PC-3 (cell line): ENCODE measurements at regions of chr2 and their contacts with region 1.

Region 1: GRCh38 chr2:128090945-128091725 is at the start of gene UGGT1:
- DNase-seq: peak; percentile 97
- ATAC-seq: peak; percentile 97
- H3K4me3 ChIP-seq: peak within 1 kb of the TSS; percentile 96
- H3K27ac ChIP-seq: peak within 1 kb of the TSS; percentile 52
- H3K4me1 ChIP-seq: peaks cover 6% of the 10 kb centered on the region; the same call in 1 of the 2 replicates
- H3K27me3 ChIP-seq: no peaks in the 10 kb centered on the region
- CTCF ChIP-seq: no peak
- total RNA-seq, gene UGGT1: 59.9 and 63.8 TPM in 2 replicates

Region 2: DNA sequence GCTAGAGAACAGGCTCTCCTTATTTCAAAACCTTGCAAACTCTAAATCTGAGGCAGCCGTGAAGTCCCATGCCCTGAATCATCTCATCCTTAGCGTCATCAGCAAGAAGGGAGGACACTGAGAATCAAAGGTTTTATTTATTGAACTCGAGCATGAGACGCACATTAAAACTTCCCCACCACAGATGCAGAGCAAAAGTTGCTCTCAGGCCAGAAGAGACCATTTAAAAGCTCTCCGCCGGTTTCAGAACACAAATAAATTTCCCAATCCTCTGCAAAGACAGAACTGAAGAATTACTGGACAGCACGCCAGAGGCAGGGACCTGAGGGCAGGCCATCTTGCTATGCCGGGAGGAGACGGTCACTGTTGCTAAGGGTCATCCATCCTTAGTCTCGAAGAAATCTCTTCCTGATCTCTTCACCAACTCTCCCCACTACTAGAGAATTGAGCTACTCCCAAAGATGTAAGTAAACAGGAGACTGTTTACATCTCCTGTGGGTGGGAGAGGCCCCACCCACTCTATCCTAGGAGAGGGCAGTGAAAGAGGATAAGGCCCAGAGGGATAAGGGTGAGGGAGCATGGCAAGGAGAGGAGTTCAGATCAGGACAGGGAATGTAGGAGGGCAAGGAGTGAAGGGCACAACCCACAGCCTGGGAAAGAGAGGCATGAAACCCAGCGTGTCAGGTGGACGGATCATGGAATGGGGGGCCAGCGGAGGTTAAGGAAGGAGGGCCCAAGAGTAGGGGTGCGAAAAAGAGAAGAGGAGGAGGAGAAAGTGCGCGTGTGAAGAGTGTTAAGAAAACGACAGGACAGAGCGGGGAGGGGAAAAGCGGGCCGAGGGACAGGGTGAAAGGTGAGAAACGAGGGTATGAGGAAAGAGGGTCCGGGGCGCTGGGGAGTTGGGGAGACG is 206.4 kb before region 1 on chr2:
- CTCF ChIA-PET with region 1: no interaction called
- POLR2A ChIA-PET with region 1: no interaction called
- intact Hi-C with region 1: loop called (anchors 10 kb)
- DNase-seq: peak; percentile 31
- ATAC-seq: peak; percentile 2; the same call in 1 of the 2 replicates
- H3K4me3 ChIP-seq: peak overlapping the region; percentile 77
- H3K27ac ChIP-seq: peak overlapping the region; percentile 57
- H3K4me1 ChIP-seq: peaks cover 31% of the 10 kb centered on the region
- H3K27me3 ChIP-seq: no peaks in the 10 kb centered on the region
- CTCF ChIP-seq: no peak

Region 3: DNA sequence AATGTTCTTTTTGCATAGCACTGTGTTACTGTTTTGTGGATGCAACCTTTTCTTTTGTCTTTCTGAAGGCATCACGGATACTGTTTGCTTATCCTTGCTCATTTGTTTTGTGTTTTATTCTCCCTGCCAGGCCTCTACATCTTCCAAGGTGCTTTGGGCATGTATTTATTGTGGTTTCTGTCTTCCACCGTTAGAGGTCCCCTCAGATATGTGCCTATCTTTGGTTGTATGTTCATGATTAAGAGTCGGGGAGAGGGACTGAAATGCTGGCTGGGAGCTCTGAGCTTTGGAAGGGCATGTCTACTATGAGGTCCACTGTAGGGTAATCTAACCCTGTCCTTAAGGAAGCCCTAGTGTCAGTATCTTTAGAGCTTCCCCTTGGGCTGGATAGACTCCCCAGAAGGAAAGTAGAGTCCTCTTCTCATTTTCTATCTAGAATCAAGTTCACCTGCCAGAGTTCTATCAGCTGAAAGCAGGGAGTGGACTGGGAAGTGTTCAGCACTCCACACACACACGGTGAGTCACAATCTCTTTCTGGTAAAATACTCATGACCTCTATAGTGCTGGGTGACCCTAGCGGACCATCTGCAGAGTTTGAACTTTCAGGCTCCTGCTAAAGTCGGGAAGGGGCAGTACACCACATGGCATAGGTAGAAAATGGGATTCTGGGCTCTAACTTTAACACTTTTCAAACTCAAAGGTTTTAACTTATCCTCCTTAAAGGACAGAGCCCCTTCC is 106.8 kb before region 1 on chr2:
- CTCF ChIA-PET with region 1: no interaction called
- POLR2A ChIA-PET with region 1: no interaction called
- intact Hi-C with region 1: no loop called
- DNase-seq: no peak
- ATAC-seq: peak; percentile 51
- H3K4me3 ChIP-seq: no peak overlapping the region
- H3K27ac ChIP-seq: no peak overlapping the region
- H3K4me1 ChIP-seq: no peaks in the 10 kb centered on the region
- H3K27me3 ChIP-seq: no peaks in the 10 kb centered on the region
- CTCF ChIP-seq: no peak

Region 4: DNA sequence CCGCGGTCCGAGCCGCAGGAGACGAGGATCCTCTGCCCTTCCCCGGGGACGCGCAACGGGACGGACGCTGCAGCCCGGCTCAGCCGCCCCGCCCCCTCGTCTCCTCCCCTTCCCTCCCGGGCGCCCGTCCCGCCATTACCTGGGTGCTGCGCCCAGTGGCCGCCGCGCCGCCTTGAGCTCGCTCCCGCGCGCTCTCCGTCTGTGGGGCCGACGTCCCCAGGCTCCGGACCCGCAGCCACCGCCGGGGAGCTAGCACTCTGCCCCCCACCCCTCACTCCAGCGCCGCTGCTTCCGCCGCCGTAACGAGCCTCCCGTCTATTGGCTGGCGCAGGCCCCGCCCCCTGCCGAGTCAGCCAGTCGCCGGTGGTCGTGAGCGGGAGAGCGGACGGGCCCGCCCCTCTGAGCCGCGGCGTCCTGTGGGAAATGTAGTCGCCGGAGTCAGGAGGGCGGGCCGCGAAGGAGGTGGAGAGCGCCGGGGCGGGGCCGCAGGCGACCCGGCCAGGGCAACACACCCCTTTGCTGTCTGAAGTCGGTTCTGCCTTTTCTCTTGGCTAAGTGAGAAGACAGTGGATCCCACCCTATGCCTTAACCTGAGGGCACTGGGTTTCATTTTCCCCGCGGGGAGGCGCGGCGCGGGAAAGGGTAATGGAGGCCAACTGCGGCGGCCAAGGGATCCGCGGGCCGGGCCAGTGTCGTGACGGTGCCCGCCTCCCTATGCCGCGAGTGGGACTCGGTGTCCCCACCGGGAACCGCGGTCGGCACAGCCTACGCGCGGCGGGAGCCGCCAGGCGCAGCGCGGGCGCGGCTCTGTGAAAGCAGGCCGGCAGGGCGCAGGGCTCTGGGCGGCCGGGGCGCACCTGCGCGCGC is 63.1 kb before region 1 on chr2 and contains the start of gene SAP130:
- CTCF ChIA-PET with region 1: no interaction called
- POLR2A ChIA-PET with region 1: no interaction called
- intact Hi-C with region 1: loop called (anchors 1 kb)
- DNase-seq: peak; percentile 95
- ATAC-seq: peak; percentile 79
- H3K4me3 ChIP-seq: peak within 1 kb of the TSS; percentile 89
- H3K27ac ChIP-seq: peak within 1 kb of the TSS; percentile 52
- H3K4me1 ChIP-seq: 0 out of 2 replicates have a peak, but pooled peaks cover 11% of the 10 kb centered on the region
- H3K27me3 ChIP-seq: no peaks in the 10 kb centered on the region
- CTCF ChIP-seq: no peak
- total RNA-seq, gene SAP130: 11.1 and 13.0 TPM in 2 replicates

Region 5: GRCh38 chr2:128062571-128062970 is 28.6 kb before region 1 on chr2:
- CTCF ChIA-PET with region 1: interaction called, 11 read pairs
- POLR2A ChIA-PET with region 1: interaction called, 4 read pairs
- intact Hi-C with region 1: loop called (anchors 1 kb)
- DNase-seq: no peak
- ATAC-seq: no peak
- H3K4me3 ChIP-seq: no peak overlapping the region
- H3K27ac ChIP-seq: no peak overlapping the region
- H3K4me1 ChIP-seq: no peaks in the 10 kb centered on the region
- H3K27me3 ChIP-seq: no peaks in the 10 kb centered on the region
- CTCF ChIP-seq: no peak

Region 6: GRCh38 chr2:128069769-128070168 is 21.4 kb before region 1 on chr2:
- CTCF ChIA-PET with region 1: no interaction called
- POLR2A ChIA-PET with region 1: no interaction called
- intact Hi-C with region 1: loop called (anchors 1 kb)
- DNase-seq: peak; percentile 81
- ATAC-seq: peak; percentile 91
- H3K4me3 ChIP-seq: no peak overlapping the region
- H3K27ac ChIP-seq: no peak overlapping the region
- H3K4me1 ChIP-seq: no peaks in the 10 kb centered on the region
- H3K27me3 ChIP-seq: no peaks in the 10 kb centered on the region
- CTCF ChIP-seq: no peak

Region 7: DNA sequence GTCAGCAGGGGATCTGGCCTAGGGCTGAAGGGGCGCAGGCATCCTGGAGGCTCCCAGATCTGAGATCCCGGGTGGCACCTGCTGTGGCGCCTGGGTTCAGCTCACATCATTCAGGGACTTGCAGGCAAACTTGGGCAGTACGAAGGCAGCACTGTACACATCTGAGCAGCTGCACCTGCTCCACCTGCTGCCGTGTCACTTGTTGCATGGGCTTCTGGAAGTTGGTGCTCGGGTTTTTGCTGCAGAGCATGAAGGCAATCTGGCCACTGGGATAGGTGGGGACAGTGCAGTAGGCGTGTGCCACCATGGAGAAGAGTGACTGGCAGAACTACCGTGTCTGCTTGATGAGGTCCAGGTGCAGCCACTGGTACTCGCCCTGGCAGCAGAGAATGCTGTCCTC is 48.5 kb after region 1 on chr2:
- CTCF ChIA-PET with region 1: no interaction called
- POLR2A ChIA-PET with region 1: no interaction called
- intact Hi-C with region 1: no loop called
- DNase-seq: no peak
- ATAC-seq: no peak
- H3K4me3 ChIP-seq: no peak overlapping the region
- H3K27ac ChIP-seq: no peak overlapping the region
- H3K4me1 ChIP-seq: no peaks in the 10 kb centered on the region
- H3K27me3 ChIP-seq: no peaks in the 10 kb centered on the region
- CTCF ChIP-seq: no peak